ENCODE measurements at regions of chr11 and their contacts with region 1.

Region 1: GRCh38 chr11:32052218-32052617 is 38.7 kb upstream of the RCN1 start:
- DNase-seq: peak in 1 of 2 donors; percentile 36
- ATAC-seq: peak; percentile 56

Region 2: GRCh38 chr11:31887180-31887579 is 165.0 kb before region 1 on chr11:
- intact Hi-C with region 1: no loop called
- DNase-seq: peak in 1 of 2 donors; percentile 6
- ATAC-seq: no peak

Region 3: GRCh38 chr11:32176223-32176934 is 124.2 kb after region 1 on chr11:
- intact Hi-C with region 1: loop called (anchors 2 to 5 kb)
- DNase-seq: peak; percentile 36 to 75
- ATAC-seq: peak; percentile 75